GM12878 (cell line): ENCODE measurements at regions of chr22 and their contacts with region 1.

Region 1: GRCh38 chr22:39532215-39533071 is at the start of gene RPS19BP1:
- DNase-seq: peak; percentile 100
- ATAC-seq: peak; percentile 80
- H3K4me3 ChIP-seq: peak within 1 kb of the TSS; percentile 99
- H3K27ac ChIP-seq: peak within 1 kb of the TSS; percentile 96
- H3K4me1 ChIP-seq: peaks cover 34% of the 10 kb centered on the region
- H3K27me3 ChIP-seq: no peaks in the 10 kb centered on the region
- CTCF ChIP-seq: no peak
- EP300 ChIP-seq: no peak
- POLR2A ChIP-seq: peak; percentile 99
- RAD21 ChIP-seq: no peak
- polyA plus RNA-seq, gene RPS19BP1: 2.7 to 14.3 TPM

Region 2: GRCh38 chr22:39170825-39171622 is 361.4 kb before region 1 on chr22:
- CTCF ChIA-PET with region 1: interaction called, 26 read pairs
- POLR2A ChIA-PET with region 1: no interaction called
- RAD21 ChIA-PET with region 1: interaction called, 19 read pairs
- SMC1A ChIA-PET with region 1: interaction called, 11 read pairs
- in situ Hi-C with region 1: no loop called
- intact Hi-C with region 1: loop called (anchors 2 kb)
- DNase-seq: peak; percentile 53
- ATAC-seq: peak; percentile 96
- H3K4me3 ChIP-seq: no peak overlapping the region
- H3K27ac ChIP-seq: no peak overlapping the region
- H3K4me1 ChIP-seq: peaks cover 15% of the 10 kb centered on the region
- H3K27me3 ChIP-seq: no peaks in the 10 kb centered on the region; a peak in 1 of 4 replicates
- CTCF ChIP-seq: peak; percentile 90 to 94 (median 93); a peak in 5 of 6 replicates
- EP300 ChIP-seq: no peak
- POLR2A ChIP-seq: no peak
- RAD21 ChIP-seq: peak; percentile 95

Region 3: GRCh38 chr22:39343259-39344048 is 189.0 kb before region 1 on chr22:
- CTCF ChIA-PET with region 1: interaction called, 47 read pairs
- POLR2A ChIA-PET with region 1: no interaction called
- RAD21 ChIA-PET with region 1: interaction called, 14 read pairs
- SMC1A ChIA-PET with region 1: interaction called, 10 read pairs
- in situ Hi-C with region 1: no loop called
- intact Hi-C with region 1: loop called (anchors 2 kb)
- DNase-seq: peak; percentile 36
- ATAC-seq: peak; percentile 95
- H3K4me3 ChIP-seq: no peak overlapping the region
- H3K27ac ChIP-seq: no peak overlapping the region
- H3K4me1 ChIP-seq: no peaks in the 10 kb centered on the region
- H3K27me3 ChIP-seq: peaks cover 0 to 1% of the 10 kb centered on the region in 2 experiments; a peak in 2 of 4 replicates
- CTCF ChIP-seq: peak; percentile 77 to 89 (median 80)
- EP300 ChIP-seq: no peak
- POLR2A ChIP-seq: no peak
- RAD21 ChIP-seq: peak; percentile 72

Region 4: GRCh38 chr22:39446295-39446721 is 86.1 kb before region 1 on chr22:
- CTCF ChIA-PET with region 1: interaction called, 27 read pairs
- POLR2A ChIA-PET with region 1: interaction called, 7 read pairs
- RAD21 ChIA-PET with region 1: interaction called, 10 read pairs
- SMC1A ChIA-PET with region 1: interaction called, 7 read pairs
- in situ Hi-C with region 1: no loop called
- intact Hi-C with region 1: no loop called
- DNase-seq: peak; percentile 59
- ATAC-seq: peak; percentile 67
- H3K4me3 ChIP-seq: 0 out of 2 replicates have a peak overlapping the region, but pooled peaks have one; percentile 94
- H3K27ac ChIP-seq: peak overlapping the region; percentile 92
- H3K4me1 ChIP-seq: peaks cover 84% of the 10 kb centered on the region
- H3K27me3 ChIP-seq: no peaks in the 10 kb centered on the region
- CTCF ChIP-seq: peak in 2 of 3 experiments; percentile 13 to 43; a peak in 2 of 6 replicates
- EP300 ChIP-seq: no peak
- POLR2A ChIP-seq: no peak
- RAD21 ChIP-seq: no peak

Region 5: DNA sequence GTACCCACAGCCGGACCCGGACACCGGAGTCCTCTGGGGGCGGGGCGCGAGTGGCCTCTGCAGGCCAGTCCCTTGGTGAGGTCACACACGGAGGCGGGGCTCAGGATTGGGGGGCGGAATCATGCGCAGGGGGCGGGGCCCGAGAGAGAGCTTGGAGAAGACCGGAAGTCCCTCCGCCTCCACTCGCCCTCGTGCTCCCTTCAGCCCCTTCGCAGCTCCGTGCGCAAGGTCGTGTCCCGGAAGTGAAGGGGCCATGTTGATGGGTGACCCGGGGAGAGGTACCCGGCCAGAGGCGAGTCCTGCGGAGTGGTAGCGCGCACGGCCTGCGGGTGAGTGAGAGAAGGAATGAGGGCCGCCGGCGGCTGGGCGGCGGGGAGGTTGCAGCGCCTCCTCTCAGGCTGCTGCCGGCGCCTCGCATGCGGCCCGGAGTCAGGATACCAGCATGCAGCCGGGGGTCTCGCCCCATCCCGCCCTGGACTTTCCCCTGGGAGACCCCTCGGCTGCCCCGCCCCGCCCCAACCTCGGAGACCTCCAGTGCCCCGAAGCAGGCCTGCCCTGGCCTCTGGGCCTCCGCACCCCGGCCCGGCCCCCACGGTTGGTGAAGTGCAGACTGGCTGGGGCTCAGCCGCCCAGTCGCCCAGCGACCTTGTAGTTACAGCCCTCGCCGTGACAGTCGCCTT is 30.2 kb before region 1 on chr22 and contains the start of gene MIEF1:
- CTCF ChIA-PET with region 1: interaction called, 372 read pairs
- POLR2A ChIA-PET with region 1: interaction called, 7 read pairs
- RAD21 ChIA-PET with region 1: interaction called, 28 read pairs
- SMC1A ChIA-PET with region 1: interaction called, 23 read pairs
- in situ Hi-C with region 1: no loop called
- intact Hi-C with region 1: loop called (anchors 2 kb)
- DNase-seq: peak; percentile 87
- ATAC-seq: peak; percentile 99
- H3K4me3 ChIP-seq: peak within 1 kb of the TSS; percentile 95
- H3K27ac ChIP-seq: peak within 1 kb of the TSS; percentile 73
- H3K4me1 ChIP-seq: 0 out of 2 replicates have a peak, but pooled peaks cover 5% of the 10 kb centered on the region
- H3K27me3 ChIP-seq: no peaks in the 10 kb centered on the region
- CTCF ChIP-seq: no peak
- EP300 ChIP-seq: no peak
- POLR2A ChIP-seq: peak; percentile 94
- RAD21 ChIP-seq: no peak
- polyA plus RNA-seq, gene MIEF1: 12.4 to 13.8 TPM

Region 6: DNA sequence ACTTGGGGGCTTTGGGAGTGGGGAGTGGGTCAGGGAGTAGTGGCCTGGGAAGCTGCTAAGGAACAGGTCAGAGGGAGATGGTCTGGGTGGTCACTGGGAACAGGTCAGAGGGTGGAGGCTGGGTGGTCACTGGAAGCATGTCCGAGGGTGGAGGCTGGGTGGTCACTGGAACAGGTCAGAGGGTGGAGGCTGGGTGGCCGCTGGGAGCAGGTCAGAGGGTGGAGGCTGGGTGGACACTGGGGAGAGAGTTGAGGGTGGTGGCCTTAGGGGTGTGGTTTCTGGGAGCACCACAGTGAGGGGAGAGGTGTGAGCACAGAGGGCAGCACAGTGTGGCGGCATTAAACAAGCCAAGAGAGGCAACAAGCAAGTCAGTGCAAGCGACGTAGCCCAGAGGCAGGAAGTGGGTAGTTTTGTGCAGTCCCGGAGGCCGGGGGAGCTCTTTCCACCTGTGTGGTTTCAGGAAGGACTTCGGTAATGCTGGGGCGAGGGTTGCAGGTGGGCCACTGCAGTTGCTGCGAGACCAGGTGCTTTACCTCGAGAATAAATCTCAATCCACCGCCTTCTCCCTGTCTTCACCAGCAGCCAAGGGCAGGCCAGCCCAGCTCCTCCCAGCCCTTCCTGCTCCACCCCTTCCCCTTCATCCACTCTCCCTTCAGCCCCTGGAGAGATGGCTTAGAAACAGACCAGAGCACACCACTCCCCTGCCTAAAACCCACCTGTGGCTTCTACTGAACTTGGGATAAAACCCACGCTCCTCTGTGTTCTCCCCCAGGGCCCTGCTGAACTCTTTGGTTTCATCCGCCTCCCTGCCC is 34.9 kb after region 1 on chr22:
- CTCF ChIA-PET with region 1: no interaction called
- POLR2A ChIA-PET with region 1: no interaction called
- RAD21 ChIA-PET with region 1: no interaction called
- SMC1A ChIA-PET with region 1: no interaction called
- in situ Hi-C with region 1: no loop called
- intact Hi-C with region 1: no loop called
- DNase-seq: no peak
- ATAC-seq: peak; percentile 70
- H3K4me3 ChIP-seq: no peak overlapping the region
- H3K27ac ChIP-seq: no peak overlapping the region
- H3K4me1 ChIP-seq: no peaks in the 10 kb centered on the region
- H3K27me3 ChIP-seq: no peaks in the 10 kb centered on the region
- CTCF ChIP-seq: 0 out of 6 replicates have a peak, but pooled peaks of 1 of the 3 experiments have one; percentile 12
- EP300 ChIP-seq: no peak
- POLR2A ChIP-seq: no peak
- RAD21 ChIP-seq: peak; percentile 21; the same call in 1 of the 2 replicates

Region 7: GRCh38 chr22:39773976-39774539 is 241.6 kb after region 1 on chr22:
- CTCF ChIA-PET with region 1: no interaction called
- POLR2A ChIA-PET with region 1: no interaction called
- RAD21 ChIA-PET with region 1: no interaction called
- SMC1A ChIA-PET with region 1: no interaction called
- in situ Hi-C with region 1: no loop called
- intact Hi-C with region 1: no loop called
- DNase-seq: peak; percentile 73
- ATAC-seq: peak; percentile 100
- H3K4me3 ChIP-seq: no peak overlapping the region
- H3K27ac ChIP-seq: peak overlapping the region; percentile 6
- H3K4me1 ChIP-seq: peaks cover 19% of the 10 kb centered on the region
- H3K27me3 ChIP-seq: no peaks in the 10 kb centered on the region
- CTCF ChIP-seq: no peak
- EP300 ChIP-seq: 0 out of 4 replicates have a peak, but pooled peaks of 1 of the 2 experiments have one; percentile 23
- POLR2A ChIP-seq: no peak
- RAD21 ChIP-seq: no peak

Region 8: DNA sequence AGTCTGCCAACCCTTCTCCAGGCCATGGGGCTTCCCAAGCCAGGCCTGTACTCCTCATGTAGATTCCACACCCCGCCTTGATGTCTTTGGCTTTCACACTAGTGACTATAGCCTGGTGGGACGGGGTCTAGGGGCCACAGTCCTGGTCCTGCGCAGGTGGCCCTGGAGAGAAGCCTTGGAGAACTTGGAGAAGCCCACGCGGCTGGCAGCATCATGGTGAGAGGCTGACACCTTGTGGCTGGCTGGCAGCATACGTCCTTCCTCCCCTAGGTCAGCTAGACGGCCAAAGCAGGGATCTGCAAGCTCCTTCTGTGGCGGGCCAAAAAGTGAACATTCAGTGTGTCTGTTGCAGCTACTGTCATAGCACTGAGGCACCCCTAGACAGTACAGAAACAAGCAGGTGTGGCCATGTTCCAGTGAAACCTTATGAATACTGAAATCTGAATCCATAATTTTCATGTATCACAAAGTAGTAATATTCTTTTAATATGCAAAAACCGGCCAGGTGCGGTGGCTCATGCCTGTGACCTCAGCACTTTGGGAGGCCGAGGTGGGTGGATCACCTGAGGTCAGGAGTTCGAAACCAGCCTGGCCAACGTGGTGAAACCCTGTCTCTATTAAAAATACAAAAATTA is 504.3 kb after region 1 on chr22:
- CTCF ChIA-PET with region 1: interaction called, 25 read pairs
- POLR2A ChIA-PET with region 1: no interaction called
- RAD21 ChIA-PET with region 1: interaction called, 5 read pairs
- SMC1A ChIA-PET with region 1: interaction called, 4 read pairs
- in situ Hi-C with region 1: no loop called
- intact Hi-C with region 1: loop called (anchors 1 kb)
- DNase-seq: no peak
- ATAC-seq: peak; percentile 97
- H3K4me3 ChIP-seq: no peak overlapping the region
- H3K27ac ChIP-seq: no peak overlapping the region
- H3K4me1 ChIP-seq: no peaks in the 10 kb centered on the region
- H3K27me3 ChIP-seq: peaks cover 6 to 8% of the 10 kb centered on the region in 2 experiments
- CTCF ChIP-seq: peak; percentile 77 to 91 (median 88)
- EP300 ChIP-seq: no peak
- POLR2A ChIP-seq: no peak
- RAD21 ChIP-seq: peak; percentile 86

Region 9: DNA sequence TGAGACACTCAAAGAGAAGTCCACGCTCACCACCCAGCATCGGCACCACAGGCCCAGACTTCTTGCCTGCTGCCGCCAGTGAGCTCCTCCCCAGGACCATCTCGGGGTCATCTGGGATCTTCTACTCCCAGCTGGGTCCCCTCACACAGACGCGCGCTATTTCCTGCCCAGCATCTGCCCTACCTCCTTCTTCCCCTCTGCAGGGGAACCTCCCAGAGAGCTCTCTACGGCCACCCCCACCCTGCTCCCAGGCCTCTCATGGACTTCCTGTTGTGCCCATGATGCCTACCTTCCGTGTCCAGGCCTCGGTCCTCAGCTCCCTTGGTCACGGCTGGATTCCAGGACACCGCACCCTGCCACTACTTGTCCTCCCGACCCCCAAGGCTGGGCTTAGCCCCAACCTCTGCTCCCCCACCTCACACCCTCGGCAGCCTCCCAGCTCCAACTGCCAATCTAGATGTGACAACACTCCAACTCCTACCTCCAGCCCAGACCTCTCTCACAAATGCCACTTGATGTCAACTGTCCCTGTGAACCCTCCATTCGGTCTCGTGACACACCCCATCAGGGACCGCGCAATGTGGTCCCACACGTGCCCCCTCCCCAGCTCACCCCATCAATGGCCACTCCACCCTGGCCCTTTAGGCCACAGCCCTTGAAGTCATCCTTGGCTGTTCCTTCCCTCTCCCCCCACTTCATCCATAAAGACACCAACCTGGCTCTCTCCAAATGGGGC is 883.3 kb after region 1 on chr22:
- CTCF ChIA-PET with region 1: no interaction called
- POLR2A ChIA-PET with region 1: interaction called, 11 read pairs
- RAD21 ChIA-PET with region 1: no interaction called
- SMC1A ChIA-PET with region 1: no interaction called
- in situ Hi-C with region 1: no loop called
- intact Hi-C with region 1: no loop called
- DNase-seq: no peak
- ATAC-seq: peak; percentile 59
- H3K4me3 ChIP-seq: peak overlapping the region; percentile 49
- H3K27ac ChIP-seq: peak overlapping the region; percentile 71
- H3K4me1 ChIP-seq: peaks cover 44% of the 10 kb centered on the region
- H3K27me3 ChIP-seq: no peaks in the 10 kb centered on the region
- CTCF ChIP-seq: no peak
- EP300 ChIP-seq: no peak
- POLR2A ChIP-seq: no peak; the same call in none of the 2 replicates
- RAD21 ChIP-seq: no peak